ENCODE measurements at regions of chr19 and their contacts with region 1.

Region 1: DNA sequence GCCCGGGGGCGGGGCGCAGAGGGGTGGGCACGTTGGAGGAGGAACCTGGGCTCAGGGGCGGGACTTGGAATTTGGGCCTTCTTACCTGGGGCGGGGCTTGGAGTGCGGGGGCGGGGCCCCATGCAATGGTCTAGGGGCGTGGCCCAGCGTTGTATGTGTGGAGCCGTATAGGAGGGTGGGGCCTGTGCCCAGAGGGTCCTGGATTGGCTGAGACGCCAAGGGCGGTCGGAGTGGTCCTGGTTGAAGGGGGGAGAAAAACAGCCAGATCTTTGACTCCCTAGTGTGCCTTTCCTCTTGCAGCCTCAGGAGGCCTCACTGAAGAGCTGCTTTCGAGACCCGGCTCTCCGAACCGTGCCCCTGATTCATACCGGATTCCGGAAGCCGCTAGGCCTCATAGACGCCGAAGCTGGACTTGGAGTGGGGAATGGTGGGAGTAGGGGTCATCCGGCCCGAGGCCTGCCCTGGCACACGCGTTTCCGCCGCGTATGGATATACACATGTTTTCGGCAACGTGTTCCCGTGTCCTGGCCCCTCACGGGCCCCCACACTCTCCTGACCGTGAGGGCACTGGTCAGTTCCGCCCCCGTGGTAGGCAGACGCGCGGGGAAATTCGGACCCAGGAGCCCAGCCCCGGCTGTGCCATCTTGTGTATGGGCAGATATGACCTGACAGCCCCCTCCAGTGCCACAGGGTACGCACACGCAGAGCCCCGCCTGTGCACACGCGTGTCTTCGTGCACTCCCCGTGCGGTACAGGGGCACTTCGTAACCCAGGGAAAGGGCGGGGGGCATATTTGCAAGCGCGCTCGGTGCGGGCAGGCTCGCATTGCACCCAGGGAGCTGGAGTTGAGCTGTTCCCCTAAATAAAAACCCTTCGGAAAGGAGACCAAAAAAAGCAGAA is 661 bp upstream of the PRR12 start:
- DNase-seq: peak; percentile 90 to 98 (median 94)
- ATAC-seq: peak; percentile 77
- H3K4me3 ChIP-seq: peak overlapping the region; percentile 78 to 97
- H3K4me3 Mint-ChIP-seq: peak overlapping the region; percentile 91
- H3K27ac ChIP-seq: peak overlapping the region; percentile 82 to 83
- H3K27ac Mint-ChIP-seq: peak overlapping the region; percentile 91
- H3K4me1 ChIP-seq: peaks cover 23% of the 10 kb centered on the region
- H3K4me1 Mint-ChIP-seq: peaks cover 36% of the 10 kb centered on the region
- H3K27me3 ChIP-seq: no peaks in the 10 kb centered on the region
- H3K27me3 Mint-ChIP-seq: no peaks in the 10 kb centered on the region
- CTCF ChIP-seq: peak; percentile 29

Region 2: DNA sequence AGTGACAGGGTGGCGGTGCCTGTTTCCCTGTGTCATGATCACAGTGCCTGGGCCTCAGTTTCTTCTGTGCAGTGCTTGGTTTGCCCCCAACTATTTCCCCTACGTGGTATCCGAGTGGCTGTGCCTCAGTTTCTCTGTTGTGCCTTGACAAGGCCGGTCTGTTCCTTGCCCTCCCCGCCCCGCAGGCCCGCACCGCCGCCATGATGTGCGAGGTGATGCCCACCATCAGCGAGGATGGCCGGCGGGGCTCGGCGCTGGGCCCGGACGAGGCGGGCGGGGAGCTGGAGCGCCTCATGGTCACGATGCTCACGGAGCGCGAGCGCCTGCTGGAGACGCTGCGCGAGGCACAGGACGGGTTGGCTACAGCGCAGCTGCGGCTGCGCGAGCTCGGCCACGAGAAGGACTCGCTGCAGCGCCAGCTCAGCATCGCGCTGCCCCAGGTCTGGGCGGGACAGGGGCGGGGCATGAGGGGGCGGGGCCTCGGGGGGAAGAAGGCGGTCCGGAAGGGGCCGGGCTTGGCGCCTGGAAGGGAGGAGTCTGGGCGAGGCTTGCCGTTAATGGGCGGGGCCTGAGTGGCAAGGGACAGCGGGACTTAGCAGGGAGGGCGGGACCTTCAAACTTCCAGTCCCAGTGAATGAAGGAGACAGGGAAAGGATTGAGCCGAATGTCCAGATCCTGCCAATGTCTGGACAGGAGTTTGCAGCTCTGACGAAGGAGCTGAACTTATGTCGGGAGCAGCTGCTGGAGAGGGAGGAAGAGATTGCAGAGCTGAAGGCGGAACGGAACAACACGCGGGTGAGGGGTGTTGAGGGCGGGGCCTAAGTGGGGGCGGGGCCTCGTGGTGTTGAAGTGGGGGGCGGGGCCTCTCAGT is 462.4 kb before region 1 on chr19:
- CTCF ChIA-PET with region 1: no interaction called
- POLR2A ChIA-PET with region 1: no interaction called
- intact Hi-C with region 1: loop called in 1 of 2 experiments (anchors 5 kb)
- DNase-seq: peak; percentile 88 to 97 (median 91)
- ATAC-seq: peak; percentile 96
- H3K4me3 ChIP-seq: peak overlapping the region; percentile 51 to 56
- H3K4me3 Mint-ChIP-seq: peak overlapping the region; percentile 79
- H3K27ac ChIP-seq: no peak overlapping the region
- H3K27ac Mint-ChIP-seq: peak overlapping the region; percentile 80
- H3K4me1 ChIP-seq: peaks cover 11% of the 10 kb centered on the region
- H3K4me1 Mint-ChIP-seq: peaks cover 17% of the 10 kb centered on the region
- H3K27me3 ChIP-seq: no peaks in the 10 kb centered on the region
- H3K27me3 Mint-ChIP-seq: no peaks in the 10 kb centered on the region
- CTCF ChIP-seq: no peak

Region 3: DNA sequence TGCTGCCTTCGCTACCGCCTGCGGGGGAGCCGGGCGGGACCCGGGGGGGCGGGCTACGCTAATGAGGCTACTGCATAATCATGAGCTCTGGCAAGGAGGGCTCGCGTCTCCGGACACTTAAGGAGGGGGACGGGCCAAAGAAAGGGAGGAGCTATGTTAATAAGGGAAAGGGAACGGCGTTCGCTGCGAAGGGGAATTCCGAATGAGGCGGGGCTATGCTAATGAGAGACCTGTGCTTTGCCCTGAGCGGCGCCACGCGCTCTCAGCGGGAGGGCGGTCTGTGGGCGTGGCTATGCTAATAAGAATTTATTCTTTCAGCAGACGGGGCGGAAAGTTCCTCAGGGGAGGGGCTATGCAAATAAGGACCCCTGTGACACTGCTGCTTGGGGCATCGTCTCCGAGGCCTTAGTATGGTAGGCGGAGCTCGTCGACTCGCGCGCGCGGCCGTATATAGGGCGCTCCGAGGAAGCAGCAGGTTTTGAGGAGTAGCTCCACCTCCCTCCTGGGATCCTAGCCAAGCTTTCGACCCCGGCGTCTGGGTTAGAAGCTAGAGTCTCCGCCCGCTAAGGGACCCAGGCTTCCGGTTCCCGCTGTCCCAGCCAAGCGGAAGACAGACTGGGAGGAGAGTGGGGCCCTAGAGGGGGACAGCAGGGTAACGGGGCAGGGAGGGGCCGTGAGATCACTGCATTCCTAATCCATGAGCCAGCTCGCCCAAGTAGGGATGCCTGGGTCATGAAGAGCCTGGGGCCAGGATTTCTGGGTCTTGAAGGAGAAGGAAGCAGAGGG is 50.0 kb after region 1 on chr19 and contains the start of gene RRAS:
- CTCF ChIA-PET with region 1: interaction called, 3 read pairs
- POLR2A ChIA-PET with region 1: interaction called, 44 read pairs
- intact Hi-C with region 1: loop called (anchors 1 kb)
- DNase-seq: peak; percentile 98 to 100 (median 99)
- ATAC-seq: peak; percentile 66
- H3K4me3 ChIP-seq: peak within 1 kb of the TSS; percentile 64 to 75
- H3K4me3 Mint-ChIP-seq: peak within 1 kb of the TSS; percentile 95
- H3K27ac ChIP-seq: peak within 1 kb of the TSS; percentile 64 to 98
- H3K27ac Mint-ChIP-seq: peak within 1 kb of the TSS; percentile 96
- H3K4me1 ChIP-seq: peaks cover 51% of the 10 kb centered on the region
- H3K4me1 Mint-ChIP-seq: peaks cover 58% of the 10 kb centered on the region
- H3K27me3 ChIP-seq: no peaks in the 10 kb centered on the region
- H3K27me3 Mint-ChIP-seq: no peaks in the 10 kb centered on the region
- CTCF ChIP-seq: no peak
- total RNA-seq, gene RRAS: 3.6 to 4.9 TPM

Region 4: DNA sequence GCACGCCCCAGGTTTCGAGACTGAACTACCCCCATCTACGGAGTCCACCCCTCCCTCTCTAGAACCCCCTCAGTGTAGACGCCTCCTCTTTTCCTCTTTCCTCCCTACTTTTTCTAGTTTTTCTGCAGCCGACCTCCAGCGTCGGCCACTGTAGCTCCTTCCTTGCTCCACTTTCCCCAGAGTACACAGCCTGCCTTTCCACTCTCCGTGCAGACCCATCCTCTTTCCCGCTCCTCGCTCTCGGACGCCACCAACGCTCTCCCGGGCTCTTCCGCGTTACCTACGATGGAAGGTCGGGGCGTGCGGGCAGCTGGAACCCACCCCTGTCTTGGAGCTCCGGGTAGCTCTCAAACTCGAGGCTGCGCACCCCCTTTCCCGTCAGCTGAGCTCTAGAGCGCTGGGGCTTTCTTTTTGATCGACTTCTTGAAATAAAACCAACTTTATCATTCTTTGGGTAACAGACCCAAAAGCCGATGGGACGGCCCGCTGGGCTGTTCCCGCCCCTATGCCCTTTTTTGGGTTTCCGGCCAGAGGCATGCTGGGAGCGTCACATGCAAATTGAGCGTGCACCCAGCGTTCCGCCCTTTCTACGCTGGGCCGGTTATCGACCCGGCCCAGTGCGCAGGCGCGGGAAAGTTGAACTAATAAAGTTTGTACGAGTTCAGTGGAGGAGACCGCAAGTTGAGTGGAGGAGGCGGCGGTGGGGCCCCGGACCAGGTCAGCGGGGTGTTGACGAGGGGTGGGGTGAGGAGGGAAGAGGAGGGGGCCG is 75.2 kb after region 1 on chr19 and contains the starts of genes BCL2L12 and IRF3:
- CTCF ChIA-PET with region 1: no interaction called
- POLR2A ChIA-PET with region 1: interaction called, 8 read pairs
- intact Hi-C with region 1: loop called (anchors 1 kb)
- DNase-seq: peak; percentile 98 to 100 (median 99)
- ATAC-seq: peak; percentile 80
- H3K4me3 ChIP-seq: peak within 1 kb of the TSS; percentile 86 to 95
- H3K4me3 Mint-ChIP-seq: peak within 1 kb of the TSS; percentile 99
- H3K27ac ChIP-seq: peak within 1 kb of the TSS; percentile 77 to 93
- H3K27ac Mint-ChIP-seq: peak within 1 kb of the TSS; percentile 99
- H3K4me1 ChIP-seq: peaks cover 29% of the 10 kb centered on the region
- H3K4me1 Mint-ChIP-seq: peaks cover 38% of the 10 kb centered on the region
- H3K27me3 ChIP-seq: no peaks in the 10 kb centered on the region
- H3K27me3 Mint-ChIP-seq: no peaks in the 10 kb centered on the region
- CTCF ChIP-seq: no peak
- total RNA-seq, gene BCL2L12: 13.1 to 14.7 TPM
- total RNA-seq, gene IRF3: 92.0 to 99.5 TPM

Region 5: DNA sequence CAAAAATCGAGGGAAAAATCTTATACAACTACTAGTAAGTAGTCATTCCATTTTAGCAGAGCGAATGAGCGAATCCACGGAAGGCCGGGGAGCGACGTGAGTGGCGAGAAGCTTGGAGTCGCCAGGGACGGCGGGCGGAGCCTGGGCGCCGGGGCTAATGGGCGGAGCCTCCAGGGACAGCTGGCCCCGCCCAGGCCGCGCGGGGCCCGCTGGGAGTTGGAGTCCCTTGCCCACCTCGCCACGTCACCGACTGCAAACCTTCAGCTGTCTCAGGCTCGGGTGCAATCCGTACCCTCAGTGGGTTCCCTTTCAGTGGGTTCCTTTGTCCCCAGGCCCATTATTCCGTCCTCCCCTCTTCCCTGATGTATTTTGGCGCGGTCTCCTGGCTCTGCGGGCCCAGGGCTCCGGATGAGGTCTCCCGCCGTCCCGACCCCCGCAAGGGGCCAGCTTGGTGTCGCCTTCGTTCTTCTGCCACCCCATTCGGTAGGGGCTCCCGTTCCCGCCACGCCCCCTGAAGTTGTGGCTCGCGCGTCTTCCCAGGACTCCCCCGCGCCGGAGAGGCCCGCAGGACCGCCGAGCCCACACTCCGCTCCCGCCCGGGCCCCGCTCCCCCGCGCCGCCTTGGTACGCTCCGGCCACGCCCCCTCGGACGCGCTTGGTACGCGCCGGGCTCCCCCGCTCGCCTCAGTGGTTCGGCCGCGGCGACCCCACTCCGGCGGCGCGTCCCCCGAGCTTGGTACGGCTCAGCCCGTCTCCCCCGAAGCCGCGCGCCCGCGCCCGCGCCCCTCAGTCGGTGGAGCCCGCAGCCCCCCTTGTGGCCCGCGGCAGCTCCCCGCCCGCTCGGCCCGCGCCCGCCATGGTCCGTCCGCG is 260.4 kb after region 1 on chr19 and contains the start of gene PTOV1:
- CTCF ChIA-PET with region 1: no interaction called
- POLR2A ChIA-PET with region 1: no interaction called
- intact Hi-C with region 1: loop called in 1 of 2 experiments (anchors 2 kb)
- DNase-seq: peak; percentile 73 to 94 (median 86)
- ATAC-seq: peak; percentile 87
- H3K4me3 ChIP-seq: peak within 1 kb of the TSS; percentile 98 to 99
- H3K4me3 Mint-ChIP-seq: peak within 1 kb of the TSS; percentile 93
- H3K27ac ChIP-seq: peak within 1 kb of the TSS; percentile 96 to 99
- H3K27ac Mint-ChIP-seq: peak within 1 kb of the TSS; percentile 96
- H3K4me1 ChIP-seq: peaks cover 30% of the 10 kb centered on the region
- H3K4me1 Mint-ChIP-seq: peaks cover 35% of the 10 kb centered on the region
- H3K27me3 ChIP-seq: no peaks in the 10 kb centered on the region
- H3K27me3 Mint-ChIP-seq: no peaks in the 10 kb centered on the region
- CTCF ChIP-seq: no peak
- total RNA-seq, gene PTOV1: 112 to 116 TPM

Region 6: GRCh38 chr19:49869441-49870176 is 279.3 kb after region 1 on chr19:
- CTCF ChIA-PET with region 1: no interaction called
- POLR2A ChIA-PET with region 1: no interaction called
- intact Hi-C with region 1: loop called in 1 of 2 experiments (anchors 5 kb)
- DNase-seq: peak; percentile 81 to 98 (median 89)
- ATAC-seq: peak; percentile 75
- H3K4me3 ChIP-seq: peak overlapping the region; percentile 73 to 85
- H3K4me3 Mint-ChIP-seq: no peak overlapping the region
- H3K27ac ChIP-seq: peak overlapping the region; percentile 64 to 96
- H3K27ac Mint-ChIP-seq: no peak overlapping the region
- H3K4me1 ChIP-seq: peaks cover 36% of the 10 kb centered on the region
- H3K4me1 Mint-ChIP-seq: peaks cover 41% of the 10 kb centered on the region
- H3K27me3 ChIP-seq: no peaks in the 10 kb centered on the region
- H3K27me3 Mint-ChIP-seq: no peaks in the 10 kb centered on the region
- CTCF ChIP-seq: no peak